Activated B cell treated with CpG ODN at 0.5 μM for 24 hours (primary cell): ENCODE measurements at regions of chr17 and their contacts with region 1.

Region 1: DNA sequence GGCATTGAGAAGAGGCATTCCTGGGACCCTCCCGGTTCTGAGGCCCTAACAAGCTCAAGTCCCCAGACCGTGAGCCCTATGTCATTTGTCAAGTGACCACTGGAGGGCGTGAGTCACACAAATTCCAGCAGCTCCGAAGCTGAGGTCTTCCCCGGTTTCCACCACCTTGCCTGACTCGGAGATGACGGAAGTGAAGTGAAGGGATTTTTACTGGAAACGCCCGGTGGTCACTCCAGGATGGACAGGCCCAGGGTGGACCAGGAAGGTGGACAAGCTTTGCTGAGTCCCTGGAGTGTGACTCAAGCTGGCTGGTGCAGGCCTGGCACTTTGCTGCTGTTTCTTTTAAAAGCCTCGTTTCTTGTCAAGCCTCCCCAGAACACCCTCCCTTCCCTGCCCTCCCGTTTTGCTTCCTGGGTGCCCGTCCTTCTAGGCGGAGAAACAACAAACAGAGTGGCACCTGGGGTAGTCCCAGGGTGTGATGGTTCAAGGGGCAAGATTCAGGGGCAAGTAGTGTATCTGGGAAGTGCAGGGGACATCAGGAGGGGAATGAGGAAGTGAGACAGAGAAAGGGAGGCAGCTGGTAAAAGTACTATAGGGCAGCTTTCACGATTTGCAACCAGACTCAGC is 5.3 kb upstream of the NOS2 start:
- DNase-seq: peak; percentile 61
- ATAC-seq: peak; percentile 64
- H3K4me3 Mint-ChIP-seq: peak overlapping the region; percentile 83
- H3K27ac Mint-ChIP-seq: peak overlapping the region; percentile 96
- H3K4me1 Mint-ChIP-seq: peaks cover 50% of the 10 kb centered on the region
- H3K27me3 Mint-ChIP-seq: no peaks in the 10 kb centered on the region
- CTCF ChIP-seq: no peak

Region 2: DNA sequence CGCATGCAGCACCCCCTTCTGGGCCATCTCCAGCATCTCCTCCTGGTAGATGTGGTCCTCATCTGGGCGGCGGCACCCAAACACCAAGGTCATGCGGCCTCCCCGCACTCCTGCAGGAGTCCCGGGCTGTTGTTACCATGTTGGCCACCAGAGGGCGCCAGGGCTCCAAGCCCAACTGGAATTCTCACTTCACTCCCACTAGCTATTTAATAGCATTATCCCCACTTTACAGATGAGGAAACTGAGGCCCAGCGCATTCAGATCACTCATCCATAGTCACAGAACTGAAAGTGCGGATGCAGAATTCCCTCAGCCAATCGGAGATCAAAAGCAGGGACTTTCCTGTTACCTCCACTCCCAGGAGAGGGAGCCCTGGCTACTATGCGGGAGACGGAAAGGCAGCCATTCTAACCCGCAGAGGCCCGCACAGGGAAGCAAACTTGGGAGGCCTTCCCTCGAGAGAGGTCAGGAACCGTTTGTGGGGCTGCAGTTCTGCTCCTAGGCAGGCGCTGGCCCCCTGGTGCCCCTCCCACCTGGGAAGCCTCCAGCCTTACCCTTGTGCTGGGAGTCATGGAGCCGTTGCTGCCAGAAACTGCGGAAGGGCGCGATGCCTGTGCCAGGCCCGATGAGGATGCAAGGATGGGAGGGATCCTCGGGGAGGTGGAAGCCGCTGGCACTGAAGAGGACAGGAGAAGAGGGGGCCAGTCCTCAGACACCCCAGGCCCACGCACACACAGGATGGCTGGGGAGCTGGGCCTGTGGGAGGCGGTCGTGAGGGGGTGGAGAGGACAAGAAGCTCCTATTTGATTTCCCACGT is 45.4 kb before region 1 on chr17:
- CTCF ChIA-PET with region 1: interaction called, 8 read pairs
- POLR2A ChIA-PET with region 1: no interaction called
- intact Hi-C with region 1: loop called (anchors 1 kb)
- DNase-seq: peak; percentile 73
- ATAC-seq: peak; percentile 50
- H3K4me3 Mint-ChIP-seq: no peak overlapping the region
- H3K27ac Mint-ChIP-seq: no peak overlapping the region
- H3K4me1 Mint-ChIP-seq: no peaks in the 10 kb centered on the region
- H3K27me3 Mint-ChIP-seq: peaks cover 4% of the 10 kb centered on the region
- CTCF ChIP-seq: peak; percentile 66

Region 3: GRCh38 chr17:27879987-27880608 is 74.5 kb after region 1 on chr17:
- CTCF ChIA-PET with region 1: interaction called, 183 read pairs
- POLR2A ChIA-PET with region 1: interaction called, 12 read pairs
- intact Hi-C with region 1: loop called (anchors 1 kb)
- DNase-seq: peak; percentile 46
- ATAC-seq: peak; percentile 85
- H3K4me3 Mint-ChIP-seq: no peak overlapping the region
- H3K27ac Mint-ChIP-seq: no peak overlapping the region
- H3K4me1 Mint-ChIP-seq: no peaks in the 10 kb centered on the region
- H3K27me3 Mint-ChIP-seq: no peaks in the 10 kb centered on the region
- CTCF ChIP-seq: peak; percentile 38

Region 4: GRCh38 chr17:27980043-27980442 is 174.4 kb after region 1 on chr17:
- CTCF ChIA-PET with region 1: no interaction called
- POLR2A ChIA-PET with region 1: no interaction called
- intact Hi-C with region 1: no loop called
- DNase-seq: no peak
- ATAC-seq: no peak
- H3K4me3 Mint-ChIP-seq: no peak overlapping the region
- H3K27ac Mint-ChIP-seq: no peak overlapping the region
- H3K4me1 Mint-ChIP-seq: peaks cover 14% of the 10 kb centered on the region
- H3K27me3 Mint-ChIP-seq: peaks cover 4% of the 10 kb centered on the region
- CTCF ChIP-seq: no peak

Region 5: GRCh38 chr17:28252436-28252835 is 446.8 kb after region 1 on chr17:
- CTCF ChIA-PET with region 1: interaction called, 23 read pairs
- POLR2A ChIA-PET with region 1: interaction called, 4 read pairs
- intact Hi-C with region 1: loop called (anchors 1 kb)
- DNase-seq: no peak
- ATAC-seq: no peak
- H3K4me3 Mint-ChIP-seq: no peak overlapping the region
- H3K27ac Mint-ChIP-seq: no peak overlapping the region
- H3K4me1 Mint-ChIP-seq: peaks cover 6% of the 10 kb centered on the region
- H3K27me3 Mint-ChIP-seq: peaks cover 17% of the 10 kb centered on the region
- CTCF ChIP-seq: no peak